ENCODE measurements at regions of chr2 and their contacts with region 1.

Region 1: GRCh38 chr2:237674731-237675276 is 47.4 kb downstream of the LRRFIP1 start:
- DNase-seq: peak; percentile 90 to 98 (median 94)
- H3K4me3 ChIP-seq: peak overlapping the region; percentile 1 to 49
- H3K4me3 Mint-ChIP-seq: peak overlapping the region; percentile 85 to 94 (median 92)
- H3K27ac ChIP-seq: peak overlapping the region; percentile 92
- H3K27ac Mint-ChIP-seq: peak overlapping the region; percentile 95 to 100 (median 100)
- H3K4me1 ChIP-seq: peaks cover 47% of the 10 kb centered on the region
- H3K4me1 Mint-ChIP-seq: peaks cover 38 to 53% (median 47%) of the 10 kb centered on the region in 4 donors
- H3K27me3 ChIP-seq: no peaks in the 10 kb centered on the region
- H3K27me3 Mint-ChIP-seq: peaks cover 0 to 1% of the 10 kb centered on the region in 2 donors

Region 2: DNA sequence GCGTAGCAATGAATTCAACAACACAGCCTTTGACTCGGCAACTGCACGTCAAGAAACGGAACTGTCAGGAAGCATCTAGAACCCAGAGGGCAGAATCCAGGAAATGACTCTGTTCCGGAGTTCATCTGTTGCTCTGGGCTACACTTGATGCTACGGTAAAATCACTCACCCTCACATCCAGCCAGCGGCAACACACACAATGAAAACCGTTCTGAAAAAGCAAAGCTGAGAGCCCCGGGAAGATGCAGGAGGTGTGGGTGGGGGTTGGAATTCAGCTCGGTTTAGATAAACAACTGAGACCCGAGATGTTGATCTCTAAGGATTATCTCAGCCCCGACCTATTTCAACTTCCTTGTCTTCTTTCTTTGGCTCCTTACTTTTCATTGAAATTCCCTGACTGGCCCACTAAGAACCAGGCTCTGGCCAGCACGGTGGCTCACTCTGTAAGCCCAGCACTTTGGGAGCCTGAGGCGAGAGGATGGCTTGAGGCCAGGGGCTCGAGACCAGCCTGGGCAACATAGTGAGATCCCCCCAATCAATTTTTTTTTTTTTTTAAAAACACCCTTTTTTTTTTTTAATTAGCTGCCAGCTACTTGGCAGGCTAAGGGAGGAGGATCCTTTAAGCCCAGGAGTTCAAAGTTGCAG is 71.0 kb before region 1 on chr2:
- CTCF ChIA-PET with region 1: interaction called, 4 read pairs
- POLR2A ChIA-PET with region 1: interaction called, 17 read pairs
- intact Hi-C with region 1: no loop called
- DNase-seq: peak; percentile 78 to 84 (median 81)
- H3K4me3 ChIP-seq: peak overlapping the region; percentile 11 to 12
- H3K4me3 Mint-ChIP-seq: peak overlapping the region; percentile 39 to 85 (median 80)
- H3K27ac ChIP-seq: peak overlapping the region; percentile 53
- H3K27ac Mint-ChIP-seq: peak overlapping the region; percentile 76 to 99 (median 96)
- H3K4me1 ChIP-seq: peaks cover 21% of the 10 kb centered on the region
- H3K4me1 Mint-ChIP-seq: peaks cover 17 to 33% (median 23%) of the 10 kb centered on the region in 4 donors
- H3K27me3 ChIP-seq: no peaks in the 10 kb centered on the region
- H3K27me3 Mint-ChIP-seq: no peaks in the 10 kb centered on the region

Region 3: DNA sequence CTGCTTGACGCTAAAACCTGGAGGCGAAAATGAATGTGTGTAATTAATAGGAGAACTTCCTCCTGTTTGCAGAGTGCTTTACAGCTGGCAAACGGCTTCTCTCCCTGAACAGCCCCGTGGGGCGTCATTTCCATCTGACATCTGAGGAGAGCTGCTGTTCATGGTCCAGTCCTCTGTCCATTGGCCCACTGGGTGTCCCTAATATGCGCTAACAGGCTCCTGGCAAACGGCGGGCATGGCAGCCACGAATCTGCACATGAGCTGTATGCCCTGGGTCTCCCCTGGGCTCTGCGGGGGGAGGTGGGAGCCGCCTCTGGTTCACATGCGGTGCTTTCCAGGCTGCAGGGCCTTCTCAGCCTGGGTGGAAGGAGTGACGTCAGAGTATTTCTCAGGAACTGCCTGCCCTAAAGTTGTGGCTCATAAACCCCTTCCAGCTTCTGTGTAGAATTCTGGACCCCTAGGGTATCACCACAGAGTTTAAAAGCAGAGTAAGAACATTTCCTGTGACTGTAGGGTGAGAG is 25.8 kb after region 1 on chr2:
- CTCF ChIA-PET with region 1: interaction called, 376 read pairs
- POLR2A ChIA-PET with region 1: interaction called, 607 read pairs
- intact Hi-C with region 1: loop called (anchors 5 kb)
- DNase-seq: peak; percentile 60 to 94 (median 66)
- H3K4me3 ChIP-seq: no peak overlapping the region
- H3K4me3 Mint-ChIP-seq: peak overlapping the region; percentile 61 to 93 (median 82)
- H3K27ac ChIP-seq: peak overlapping the region; percentile 70
- H3K27ac Mint-ChIP-seq: peak overlapping the region; percentile 90 to 96 (median 96)
- H3K4me1 ChIP-seq: peaks cover 100% of the 10 kb centered on the region
- H3K4me1 Mint-ChIP-seq: peaks cover 76 to 100% (median 93%) of the 10 kb centered on the region in 4 donors
- H3K27me3 ChIP-seq: no peaks in the 10 kb centered on the region
- H3K27me3 Mint-ChIP-seq: no peaks in the 10 kb centered on the region

Region 4: DNA sequence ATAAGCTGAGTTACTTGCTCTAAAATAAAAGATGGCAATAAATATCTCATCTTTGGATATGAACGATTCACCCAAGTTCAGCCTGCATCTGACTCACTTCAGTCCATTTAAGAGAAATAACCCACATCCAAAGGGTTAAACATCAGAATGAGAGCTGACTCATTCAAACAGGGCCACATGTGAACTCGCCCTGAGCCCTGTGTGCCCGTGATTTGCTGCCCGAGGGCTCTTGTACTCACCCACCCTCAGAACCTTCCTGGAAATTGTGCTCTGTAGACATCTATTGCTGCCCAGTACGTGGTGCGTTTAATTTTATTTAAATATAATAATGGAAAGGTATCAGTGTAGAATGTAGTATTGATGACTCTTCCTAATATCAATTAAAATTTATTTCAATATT is 56.9 kb after region 1 on chr2:
- CTCF ChIA-PET with region 1: interaction called, 135 read pairs
- POLR2A ChIA-PET with region 1: interaction called, 22 read pairs
- intact Hi-C with region 1: no loop called
- DNase-seq: peak in 1 of 5 donors; percentile 51
- H3K4me3 ChIP-seq: no peak overlapping the region
- H3K4me3 Mint-ChIP-seq: peak overlapping the region in 7 of 8 donors; percentile 46 to 83 (median 63)
- H3K27ac ChIP-seq: peak overlapping the region; percentile 24
- H3K27ac Mint-ChIP-seq: peak overlapping the region; percentile 67 to 92 (median 85)
- H3K4me1 ChIP-seq: peaks cover 60% of the 10 kb centered on the region
- H3K4me1 Mint-ChIP-seq: peaks cover 47 to 84% (median 69%) of the 10 kb centered on the region in 4 donors
- H3K27me3 ChIP-seq: no peaks in the 10 kb centered on the region
- H3K27me3 Mint-ChIP-seq: no peaks in the 10 kb centered on the region

Region 5: GRCh38 chr2:237752761-237753165 is 78.0 kb after region 1 on chr2:
- CTCF ChIA-PET with region 1: interaction called, 434 read pairs
- POLR2A ChIA-PET with region 1: interaction called, 75 read pairs
- intact Hi-C with region 1: no loop called
- DNase-seq: peak in 1 of 5 donors; percentile 51
- H3K4me3 ChIP-seq: no peak overlapping the region
- H3K4me3 Mint-ChIP-seq: no peak overlapping the region
- H3K27ac ChIP-seq: no peak overlapping the region
- H3K27ac Mint-ChIP-seq: peak overlapping the region; percentile 6 to 70 (median 32)
- H3K4me1 ChIP-seq: peaks cover 5% of the 10 kb centered on the region
- H3K4me1 Mint-ChIP-seq: peaks cover 3 to 21% (median 10%) of the 10 kb centered on the region in 4 donors
- H3K27me3 ChIP-seq: no peaks in the 10 kb centered on the region
- H3K27me3 Mint-ChIP-seq: no peaks in the 10 kb centered on the region

Region 6: DNA sequence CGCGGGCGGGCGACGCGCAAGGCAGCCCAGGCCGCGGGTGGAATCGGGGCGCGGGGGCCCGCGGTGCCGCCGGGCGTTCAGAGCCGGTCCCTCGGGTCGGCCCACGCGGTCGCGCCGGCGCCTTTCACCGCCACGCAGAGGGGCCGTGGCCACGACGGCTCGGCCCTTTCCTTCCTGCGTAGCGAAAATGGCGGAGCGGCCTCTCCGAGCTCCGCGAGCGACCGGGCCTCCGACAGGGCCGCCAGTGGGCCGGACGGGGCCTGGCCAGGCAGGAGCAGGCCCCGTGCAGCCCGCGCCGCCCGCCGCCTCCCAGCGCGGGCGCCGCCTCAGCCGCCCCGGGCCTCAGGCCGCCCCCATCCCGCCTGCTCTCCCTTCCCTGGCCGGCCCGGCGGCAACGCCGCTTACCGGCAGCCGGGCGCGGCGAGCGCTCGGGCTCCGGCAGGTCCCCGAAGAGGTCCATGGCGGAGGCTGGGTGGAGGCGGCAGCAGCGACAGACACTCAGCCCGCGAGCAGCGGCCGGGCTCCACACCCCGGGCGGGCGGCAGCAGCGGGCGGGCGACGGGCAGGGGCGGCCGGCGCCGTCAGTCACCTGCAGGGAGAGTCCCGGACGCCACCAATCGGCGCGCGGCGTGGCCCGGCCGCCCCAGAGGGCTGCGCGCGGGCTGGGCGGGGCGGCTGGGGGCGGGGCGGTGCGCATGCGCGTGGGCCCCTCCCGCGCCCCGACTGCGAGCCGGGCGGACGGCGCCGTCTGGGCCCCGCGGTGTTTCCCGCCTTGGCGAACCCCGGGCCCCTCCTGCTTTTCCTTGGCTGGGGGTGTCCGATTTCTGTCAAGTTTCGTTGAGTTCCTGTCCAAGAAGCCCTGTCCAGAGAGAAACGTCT is 528.5 kb after region 1 on chr2 and contains the start of gene ILKAP:
- CTCF ChIA-PET with region 1: no interaction called
- POLR2A ChIA-PET with region 1: no interaction called
- intact Hi-C with region 1: loop called (anchors 5 kb)
- DNase-seq: peak; percentile 88 to 93 (median 91)
- H3K4me3 ChIP-seq: peak within 1 kb of the TSS; percentile 30 to 72
- H3K4me3 Mint-ChIP-seq: peak within 1 kb of the TSS; percentile 87 to 94 (median 91)
- H3K27ac ChIP-seq: peak within 1 kb of the TSS; percentile 79
- H3K27ac Mint-ChIP-seq: peak within 1 kb of the TSS; percentile 89 to 97 (median 94)
- H3K4me1 ChIP-seq: peaks cover 48% of the 10 kb centered on the region
- H3K4me1 Mint-ChIP-seq: peaks cover 28 to 46% (median 36%) of the 10 kb centered on the region in 4 donors
- H3K27me3 ChIP-seq: no peaks in the 10 kb centered on the region
- H3K27me3 Mint-ChIP-seq: no peaks in the 10 kb centered on the region
- total RNA-seq, gene ILKAP: 78.2 to 87.8 TPM